Heart right ventricle (tissue), 16 donors: ENCODE measurements at regions of chr4 and their contacts with region 1.

Region 1: DNA sequence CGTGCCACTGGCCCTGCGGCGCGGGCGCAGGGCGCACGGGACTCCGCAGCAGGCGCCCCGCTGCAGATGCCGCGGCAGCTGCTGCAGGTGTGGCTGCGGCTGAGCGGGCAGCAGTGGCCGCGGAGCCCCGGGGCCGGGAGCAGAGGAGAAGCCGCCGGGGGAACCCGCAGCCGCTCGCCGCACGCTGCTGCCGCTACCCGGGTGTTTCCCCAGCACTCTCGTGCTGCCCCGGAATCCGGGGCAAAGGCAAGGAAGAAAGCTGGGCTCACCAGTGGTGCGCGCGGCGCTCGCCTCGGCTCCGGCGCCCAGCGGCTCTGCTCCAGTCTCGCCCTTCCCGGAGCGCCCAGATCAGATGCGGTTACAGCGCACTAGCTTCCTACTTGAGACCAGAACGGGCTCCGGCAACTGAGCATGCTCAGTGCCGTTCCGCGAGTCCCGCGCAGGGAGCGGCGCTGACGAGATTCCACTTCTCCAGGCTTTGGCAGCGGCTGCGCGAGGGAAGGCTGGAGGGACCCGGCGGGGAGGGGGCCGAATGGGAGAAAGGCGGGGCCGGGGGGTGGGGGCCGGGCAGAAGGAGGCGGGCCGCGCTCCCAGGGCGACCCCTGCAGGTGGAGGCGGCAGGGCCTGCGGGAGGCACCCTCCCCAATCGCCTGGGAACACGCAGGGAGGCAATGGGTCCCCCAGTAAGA is at the start of gene APBB2:
- DNase-seq: peak; percentile 95 to 96
- ATAC-seq: peak; percentile 93 to 96 (median 94)
- H3K4me3 ChIP-seq: peak within 1 kb of the TSS; percentile 64 to 98 (median 92)
- H3K27ac ChIP-seq: peak within 1 kb of the TSS; percentile 81 to 96 (median 88)
- H3K4me1 ChIP-seq: peaks cover 0 to 69% (median 38%) of the 10 kb centered on the region in 9 donors
- H3K27me3 ChIP-seq: peaks cover 0 to 53% (median 0%) of the 10 kb centered on the region in 7 donors
- CTCF ChIP-seq: peak; percentile 84 to 96 (median 94)
- total RNA-seq, gene APBB2: 22.3 to 35.4 (median 27.8) TPM

Region 2: GRCh38 chr4:40736910-40737309 is 477.4 kb before region 1 on chr4:
- intact Hi-C with region 1: loop called in 2 of 10 experiments (anchors 10 kb)
- DNase-seq: no peak
- ATAC-seq: no peak
- H3K4me3 ChIP-seq: no peak overlapping the region
- H3K27ac ChIP-seq: no peak overlapping the region
- H3K4me1 ChIP-seq: peaks cover 0 to 21% (median 2%) of the 10 kb centered on the region in 9 donors
- H3K27me3 ChIP-seq: peaks cover 0 to 9% (median 0%) of the 10 kb centered on the region in 7 donors
- CTCF ChIP-seq: peak in 7 of 9 donors; percentile 19 to 47 (median 40)

Region 3: GRCh38 chr4:40924096-40924792 is 290.0 kb before region 1 on chr4:
- intact Hi-C with region 1: loop called (anchors 1 to 5 kb)
- DNase-seq: peak; percentile 35 to 66
- ATAC-seq: peak in 7 of 8 donors; percentile 52 to 60 (median 54)
- H3K4me3 ChIP-seq: no peak overlapping the region
- H3K27ac ChIP-seq: peak overlapping the region in 1 of 10 donors; percentile 24
- H3K4me1 ChIP-seq: peaks cover 0 to 19% (median 5%) of the 10 kb centered on the region in 9 donors
- H3K27me3 ChIP-seq: no peaks in the 10 kb centered on the region
- CTCF ChIP-seq: peak; percentile 74 to 95 (median 79)

Region 4: DNA sequence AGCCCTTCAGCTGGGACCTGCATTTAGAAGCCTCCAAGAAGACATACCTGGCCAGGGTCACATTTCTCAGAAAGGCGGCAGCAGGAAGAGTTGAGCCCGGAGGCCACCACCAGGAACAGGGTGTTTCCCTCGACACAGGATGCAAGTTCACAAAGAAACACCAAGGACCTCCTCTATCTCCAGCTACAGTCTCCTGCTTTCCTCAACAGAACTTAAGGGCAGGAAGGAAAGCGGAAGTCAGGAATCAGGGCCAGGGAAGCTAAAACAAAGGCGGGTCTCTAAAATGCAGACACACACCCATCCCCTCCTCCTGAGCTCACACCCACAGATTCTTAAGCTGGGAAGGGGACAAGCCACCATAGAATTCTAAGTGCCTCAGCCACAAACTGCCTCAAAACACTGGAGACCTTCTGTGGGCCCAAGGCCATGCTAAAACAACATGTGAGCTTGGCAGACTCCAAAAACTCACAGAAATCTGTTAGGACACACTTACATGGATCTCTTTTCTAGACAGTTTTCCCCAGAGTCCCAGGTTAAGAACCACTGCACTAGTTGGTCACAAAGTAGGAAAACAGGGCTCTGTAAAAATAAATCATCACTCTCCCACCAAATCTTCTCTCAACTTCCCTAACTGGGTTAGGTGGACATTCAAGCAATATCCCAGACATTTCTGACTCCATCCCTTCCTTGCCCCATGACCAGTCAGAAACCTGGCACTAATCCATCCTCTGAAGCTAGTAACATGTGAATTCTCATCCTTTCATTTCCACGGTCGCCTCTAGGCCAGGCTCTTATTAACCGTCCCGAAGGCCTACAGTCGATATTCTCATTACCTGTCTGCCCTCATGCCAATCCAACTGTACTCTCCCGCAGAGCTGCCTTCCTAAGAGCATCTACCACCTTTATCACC is 163.2 kb before region 1 on chr4:
- intact Hi-C with region 1: loop called in 4 of 10 experiments (anchors 5 to 10 kb)
- DNase-seq: peak in 1 of 2 donors; percentile 57
- ATAC-seq: peak; percentile 56 to 92 (median 87)
- H3K4me3 ChIP-seq: peak overlapping the region in 7 of 10 donors; percentile 3 to 49 (median 38)
- H3K27ac ChIP-seq: peak overlapping the region; percentile 64 to 94 (median 78)
- H3K4me1 ChIP-seq: peaks cover 4 to 62% (median 17%) of the 10 kb centered on the region in 9 donors
- H3K27me3 ChIP-seq: no peaks in the 10 kb centered on the region
- CTCF ChIP-seq: no peak

Region 5: DNA sequence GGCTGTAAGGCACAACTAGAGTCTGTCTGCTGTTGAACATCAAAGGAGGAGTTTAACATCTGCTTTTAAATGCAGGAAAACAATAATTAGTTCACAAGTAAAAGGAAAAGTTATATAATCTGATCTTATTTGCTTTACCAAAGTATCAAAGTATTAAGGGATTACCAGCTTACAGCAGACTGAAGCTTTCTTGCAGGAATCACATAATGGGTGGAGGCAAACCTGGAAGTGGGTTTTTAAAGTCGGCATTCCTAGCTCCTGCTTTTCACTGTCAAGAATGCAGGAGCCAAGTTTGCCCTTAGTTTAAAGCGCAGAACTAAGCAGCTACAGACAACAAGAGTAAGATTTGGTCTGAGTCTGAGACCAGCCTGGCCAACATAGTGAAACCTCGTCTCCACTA is 122.2 kb before region 1 on chr4:
- intact Hi-C with region 1: no loop called
- DNase-seq: no peak
- ATAC-seq: no peak
- H3K4me3 ChIP-seq: no peak overlapping the region
- H3K27ac ChIP-seq: no peak overlapping the region
- H3K4me1 ChIP-seq: peaks cover 0 to 32% (median 0%) of the 10 kb centered on the region in 9 donors
- H3K27me3 ChIP-seq: no peaks in the 10 kb centered on the region
- CTCF ChIP-seq: no peak

Region 6: DNA sequence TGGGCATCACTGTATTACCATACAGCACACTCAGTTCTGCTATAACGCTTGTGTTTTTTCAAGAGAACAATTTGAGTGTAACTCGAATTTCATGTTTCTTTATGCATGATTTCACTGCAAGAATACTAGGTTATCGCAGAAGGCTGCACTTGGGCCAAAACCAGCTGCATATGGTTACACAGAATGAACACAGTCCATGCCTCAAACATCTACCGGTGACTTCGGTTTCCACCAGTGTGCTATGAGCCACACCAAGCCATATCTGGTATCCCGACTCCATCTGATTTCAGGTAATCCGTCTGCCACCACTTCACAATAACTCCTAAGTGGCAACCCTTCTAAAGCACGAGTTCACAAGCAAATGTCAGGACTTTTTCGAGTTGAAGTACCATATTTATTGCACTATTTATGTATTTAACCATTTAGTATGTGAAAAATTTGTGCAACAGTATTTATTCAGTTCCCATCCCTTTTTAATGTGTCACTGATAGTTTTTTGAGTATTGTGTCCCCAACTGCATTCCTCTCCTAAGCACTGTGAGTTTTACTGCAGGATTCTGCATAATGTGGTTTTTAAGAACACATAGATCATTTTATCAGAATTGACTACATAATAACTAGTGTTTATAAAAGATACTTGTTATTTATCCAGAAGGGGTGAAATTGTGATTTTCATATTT is 111.7 kb before region 1 on chr4:
- intact Hi-C with region 1: loop called in 1 of 10 experiments (anchors 5 kb)
- DNase-seq: no peak
- ATAC-seq: no peak
- H3K4me3 ChIP-seq: no peak overlapping the region
- H3K27ac ChIP-seq: peak overlapping the region in 1 of 10 donors; percentile 17
- H3K4me1 ChIP-seq: peaks cover 0 to 77% (median 34%) of the 10 kb centered on the region in 9 donors
- H3K27me3 ChIP-seq: no peaks in the 10 kb centered on the region
- CTCF ChIP-seq: no peak

Region 7: GRCh38 chr4:41360214-41360920 is 146.1 kb after region 1 on chr4:
- intact Hi-C with region 1: no loop called
- DNase-seq: peak; percentile 81 to 85
- ATAC-seq: peak; percentile 73 to 92 (median 84)
- H3K4me3 ChIP-seq: peak overlapping the region; percentile 72 to 97 (median 85)
- H3K27ac ChIP-seq: peak overlapping the region; percentile 84 to 95 (median 92)
- H3K4me1 ChIP-seq: peaks cover 9 to 47% (median 36%) of the 10 kb centered on the region in 9 donors
- H3K27me3 ChIP-seq: peaks cover 0 to 39% (median 0%) of the 10 kb centered on the region in 7 donors
- CTCF ChIP-seq: no peak